B cell (primary cell): ENCODE measurements at regions of chr9 and their contacts with region 1.

Region 1: GRCh38 chr9:124267271-124267807 is 9.6 kb downstream of the NEK6 start:
- DNase-seq: peak; percentile 70
- ATAC-seq: peak; percentile 54
- H3K4me3 ChIP-seq: no peak overlapping the region
- H3K4me3 Mint-ChIP-seq: peak overlapping the region; percentile 74
- H3K27ac ChIP-seq: peak overlapping the region; percentile 73
- H3K27ac Mint-ChIP-seq: peak overlapping the region; percentile 91
- H3K4me1 ChIP-seq: peaks cover 69 to 98% of the 10 kb centered on the region in 2 donors
- H3K4me1 Mint-ChIP-seq: peaks cover 83% of the 10 kb centered on the region
- H3K27me3 ChIP-seq: no peaks in the 10 kb centered on the region
- H3K27me3 Mint-ChIP-seq: no peaks in the 10 kb centered on the region
- CTCF ChIP-seq: no peak

Region 2: GRCh38 chr9:124197177-124198095 is 69.9 kb before region 1 on chr9:
- CTCF ChIA-PET with region 1: interaction called, 12 read pairs
- POLR2A ChIA-PET with region 1: interaction called, 5 read pairs
- intact Hi-C with region 1: no loop called
- DNase-seq: peak; percentile 88
- ATAC-seq: peak; percentile 84
- H3K4me3 ChIP-seq: peak overlapping the region in 4 of 5 experiments; percentile 22 to 42 (median 30)
- H3K4me3 Mint-ChIP-seq: peak overlapping the region; percentile 81
- H3K27ac ChIP-seq: peak overlapping the region; percentile 82 to 90
- H3K27ac Mint-ChIP-seq: peak overlapping the region; percentile 99
- H3K4me1 ChIP-seq: peaks cover 53 to 59% of the 10 kb centered on the region in 2 donors
- H3K4me1 Mint-ChIP-seq: peaks cover 57% of the 10 kb centered on the region
- H3K27me3 ChIP-seq: no peaks in the 10 kb centered on the region
- H3K27me3 Mint-ChIP-seq: no peaks in the 10 kb centered on the region
- CTCF ChIP-seq: peak; percentile 33

Region 3: DNA sequence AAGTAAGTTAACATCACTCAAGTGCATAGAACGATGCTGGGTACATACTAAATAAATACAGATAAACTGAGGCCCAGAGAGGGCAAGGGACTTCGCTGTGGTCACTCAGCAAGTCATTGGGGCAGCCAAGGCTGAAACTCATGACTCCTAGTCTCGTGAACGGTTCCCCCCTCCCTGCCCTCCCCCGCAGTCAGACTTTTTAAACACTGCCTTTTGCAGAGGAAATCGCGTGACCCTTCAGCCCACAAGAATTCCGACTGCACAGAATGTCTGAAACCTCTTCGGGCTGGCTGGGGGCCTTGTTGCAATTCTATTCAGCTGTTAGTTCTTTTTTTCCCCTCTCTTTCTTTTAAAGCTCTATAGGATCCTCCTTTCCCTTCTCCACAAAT is 18.6 kb after region 1 on chr9:
- CTCF ChIA-PET with region 1: interaction called, 21 read pairs
- POLR2A ChIA-PET with region 1: interaction called, 7 read pairs
- intact Hi-C with region 1: loop called (anchors 1 kb)
- DNase-seq: peak; percentile 85
- ATAC-seq: peak; percentile 42
- H3K4me3 ChIP-seq: peak overlapping the region in 2 of 5 experiments; percentile 7 to 48
- H3K4me3 Mint-ChIP-seq: peak overlapping the region; percentile 84
- H3K27ac ChIP-seq: peak overlapping the region; percentile 73 to 86
- H3K27ac Mint-ChIP-seq: peak overlapping the region; percentile 96
- H3K4me1 ChIP-seq: peaks cover 63 to 88% of the 10 kb centered on the region in 2 donors
- H3K4me1 Mint-ChIP-seq: peaks cover 87% of the 10 kb centered on the region
- H3K27me3 ChIP-seq: no peaks in the 10 kb centered on the region
- H3K27me3 Mint-ChIP-seq: no peaks in the 10 kb centered on the region
- CTCF ChIP-seq: no peak

Region 4: GRCh38 chr9:124291801-124292396 is 24.6 kb after region 1 on chr9:
- CTCF ChIA-PET with region 1: interaction called, 21 read pairs
- POLR2A ChIA-PET with region 1: interaction called, 7 read pairs
- intact Hi-C with region 1: no loop called
- DNase-seq: peak; percentile 79
- ATAC-seq: peak; percentile 54
- H3K4me3 ChIP-seq: peak overlapping the region in 3 of 5 experiments; percentile 10 to 25 (median 20)
- H3K4me3 Mint-ChIP-seq: peak overlapping the region; percentile 43
- H3K27ac ChIP-seq: peak overlapping the region; percentile 55 to 63
- H3K27ac Mint-ChIP-seq: peak overlapping the region; percentile 80
- H3K4me1 ChIP-seq: peaks cover 68 to 87% of the 10 kb centered on the region in 2 donors
- H3K4me1 Mint-ChIP-seq: peaks cover 91% of the 10 kb centered on the region
- H3K27me3 ChIP-seq: no peaks in the 10 kb centered on the region
- H3K27me3 Mint-ChIP-seq: no peaks in the 10 kb centered on the region
- CTCF ChIP-seq: peak; percentile 35

Region 5: GRCh38 chr9:124326378-124326777 is 59.0 kb after region 1 on chr9:
- CTCF ChIA-PET with region 1: no interaction called
- POLR2A ChIA-PET with region 1: interaction called, 3 read pairs
- intact Hi-C with region 1: loop called (anchors 2 kb)
- DNase-seq: no peak
- ATAC-seq: no peak
- H3K4me3 ChIP-seq: no peak overlapping the region
- H3K4me3 Mint-ChIP-seq: no peak overlapping the region
- H3K27ac ChIP-seq: no peak overlapping the region
- H3K27ac Mint-ChIP-seq: peak overlapping the region; percentile 50
- H3K4me1 ChIP-seq: peaks cover 0 to 22% of the 10 kb centered on the region in 2 donors
- H3K4me1 Mint-ChIP-seq: peaks cover 27% of the 10 kb centered on the region
- H3K27me3 ChIP-seq: no peaks in the 10 kb centered on the region
- H3K27me3 Mint-ChIP-seq: no peaks in the 10 kb centered on the region
- CTCF ChIP-seq: no peak